ENCODE measurements at regions of chr1 and their contacts with region 1.

Region 1: GRCh38 chr1:174262349-174263241 is 103.3 kb downstream of the RABGAP1L start:
- DNase-seq: no peak
- ATAC-seq: peak; percentile 56

Region 2: GRCh38 chr1:173946380-173946921 is 316.1 kb before region 1 on chr1:
- intact Hi-C with region 1: no loop called
- DNase-seq: no peak
- ATAC-seq: no peak

Region 3: DNA sequence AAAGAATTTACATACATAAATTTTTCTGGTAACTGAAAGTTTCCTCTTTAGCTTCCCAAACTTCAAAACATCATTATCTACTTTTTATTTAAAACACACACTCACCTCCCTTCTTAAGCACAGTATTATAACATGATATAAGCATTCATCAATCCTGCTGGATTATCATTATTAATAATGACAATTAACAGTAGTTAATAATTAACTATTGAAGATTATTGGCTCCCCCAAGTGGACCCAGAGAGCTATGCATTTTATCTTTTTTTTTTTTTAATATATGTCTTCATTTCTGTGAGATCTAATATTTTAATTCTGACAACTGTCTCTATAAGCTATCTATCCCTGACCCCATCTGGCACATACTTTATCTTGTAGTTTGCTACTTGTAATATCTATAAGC is 485.0 kb after region 1 on chr1:
- intact Hi-C with region 1: loop called (anchors 5 kb)
- DNase-seq: no peak
- ATAC-seq: no peak